PC-9 (cell line): ENCODE measurements at regions of chr7 and their contacts with region 1.

Region 1: DNA sequence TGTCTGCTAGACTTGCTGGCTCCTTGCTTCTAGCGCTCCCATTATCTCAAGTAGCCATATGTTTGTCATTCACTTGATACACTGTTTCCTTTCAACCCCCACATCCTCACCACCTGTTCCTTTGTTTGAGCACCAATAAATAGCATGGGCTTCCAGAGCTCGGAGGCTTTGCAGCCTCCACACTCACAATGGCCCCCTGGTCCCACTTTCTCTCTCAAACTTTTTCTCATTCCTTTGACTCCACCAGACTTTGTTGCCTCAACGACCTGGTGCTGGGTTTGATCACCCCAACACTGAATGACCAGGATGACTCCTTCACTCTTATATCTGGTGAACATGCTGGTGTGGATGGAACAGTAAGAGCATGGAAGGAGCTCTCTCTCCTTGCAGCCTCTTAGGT is 114.5 kb upstream of the TRIM24 start:
- DNase-seq: no peak
- H3K4me3 ChIP-seq: no peak overlapping the region
- H3K27ac ChIP-seq: no peak overlapping the region
- H3K4me1 ChIP-seq: no peaks in the 10 kb centered on the region
- H3K27me3 ChIP-seq: no peaks in the 10 kb centered on the region
- CTCF ChIP-seq: no peak

Region 2: DNA sequence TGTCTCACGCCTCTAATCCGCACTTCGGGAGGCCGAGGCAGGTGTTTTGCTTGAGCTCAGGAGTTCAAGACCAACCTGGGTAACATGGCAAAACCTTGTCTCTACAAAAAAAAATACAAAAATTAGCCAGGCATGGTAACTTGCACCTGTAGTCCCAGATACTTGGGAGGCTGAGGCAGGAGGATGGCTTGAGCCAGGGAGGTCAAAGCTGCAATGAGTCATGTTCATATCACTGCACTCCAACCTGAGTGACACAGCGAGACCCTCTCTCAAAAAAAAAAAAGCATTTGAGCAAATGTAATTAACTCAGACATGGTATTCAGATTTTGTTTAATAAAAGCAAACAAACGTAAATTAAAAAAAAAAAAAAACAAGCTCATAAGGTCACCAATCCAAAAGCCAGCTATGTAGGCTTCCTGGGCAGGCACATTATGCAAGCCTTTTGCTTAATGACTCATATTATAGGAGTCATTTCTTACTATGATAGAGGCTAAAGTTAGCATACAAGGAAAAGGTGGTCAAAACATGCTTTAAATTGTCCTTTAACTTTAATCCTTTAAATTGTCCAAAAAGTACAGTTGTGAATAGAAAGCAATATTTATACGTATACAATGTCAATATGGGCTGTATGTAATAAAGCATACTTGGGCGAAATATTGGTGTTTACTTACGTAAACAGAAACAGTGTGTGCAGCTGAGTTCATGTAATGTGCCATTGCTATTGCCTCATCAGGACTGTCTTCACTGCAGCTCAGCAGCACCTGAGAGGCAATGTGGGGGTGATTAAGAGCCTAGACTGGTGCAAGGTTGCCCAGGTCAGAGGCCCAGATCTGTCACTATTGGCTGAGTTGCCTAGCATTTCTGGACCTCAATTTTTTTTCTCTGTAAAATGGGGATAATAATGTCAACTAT is 256.2 kb before region 1 on chr7:
- CTCF ChIA-PET with region 1: no interaction called
- POLR2A ChIA-PET with region 1: interaction called, 11 read pairs
- intact Hi-C with region 1: no loop called
- DNase-seq: peak in 1 of 2 experiments; percentile 94
- H3K4me3 ChIP-seq: peak overlapping the region; percentile 16; the same call in 1 of the 2 replicates
- H3K27ac ChIP-seq: peak overlapping the region; percentile 95
- H3K4me1 ChIP-seq: peaks cover 44% of the 10 kb centered on the region
- H3K27me3 ChIP-seq: no peaks in the 10 kb centered on the region
- CTCF ChIP-seq: no peak